Pancreas (tissue), 10 donors: ENCODE measurements at regions of chr17 and their contacts with region 1.

Region 1: DNA sequence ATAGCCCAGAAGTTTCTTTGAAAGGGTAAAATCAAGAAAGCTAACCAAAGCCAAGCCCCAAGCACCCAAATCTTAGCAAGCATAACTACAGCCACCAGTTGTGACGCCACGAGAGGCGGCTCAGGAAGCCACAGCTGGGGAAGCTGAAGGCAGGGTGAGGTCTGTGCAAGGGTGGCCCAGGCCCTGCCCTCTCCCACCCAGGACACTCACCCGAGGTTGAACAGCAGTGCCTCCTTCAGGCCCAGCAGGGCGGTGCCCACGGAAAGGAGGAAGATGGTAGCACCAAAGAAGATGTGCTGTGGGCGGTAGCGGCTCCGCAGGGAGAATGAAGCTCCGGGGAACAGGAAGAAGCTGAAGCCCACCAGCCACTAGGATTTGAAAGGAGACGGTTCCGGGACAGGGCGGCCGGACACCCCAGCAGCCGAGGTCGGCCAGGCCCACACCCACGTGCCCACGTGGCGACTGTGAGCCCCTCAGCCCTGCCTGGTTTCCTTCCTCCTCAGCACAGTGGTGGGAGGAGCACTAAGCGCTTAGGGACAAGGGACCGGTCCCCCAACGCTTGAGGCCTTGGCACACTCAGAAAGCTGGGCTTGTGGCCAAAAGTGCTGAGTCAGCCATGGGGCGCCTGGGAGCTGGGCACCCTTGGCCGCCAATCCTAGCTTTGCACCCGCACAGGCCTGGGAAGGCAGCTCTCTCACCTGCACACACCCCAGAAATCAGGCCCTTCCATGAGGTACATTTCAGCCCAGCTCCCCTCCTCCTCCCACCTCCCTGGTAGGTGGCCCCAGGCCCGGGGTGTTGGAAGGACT is 11.0 kb downstream of the CYB561 start:
- DNase-seq: peak; percentile 90 to 94 (median 92)
- ATAC-seq: peak; percentile 71 to 80 (median 72)
- H3K4me3 ChIP-seq: peak overlapping the region in 1 of 4 donors; percentile 9
- H3K27ac ChIP-seq: peak overlapping the region; percentile 49 to 74 (median 66)
- H3K4me1 ChIP-seq: peaks cover 28 to 53% (median 42%) of the 10 kb centered on the region in 3 donors
- H3K27me3 ChIP-seq: no peaks in the 10 kb centered on the region
- CTCF ChIP-seq: no peak

Region 2: DNA sequence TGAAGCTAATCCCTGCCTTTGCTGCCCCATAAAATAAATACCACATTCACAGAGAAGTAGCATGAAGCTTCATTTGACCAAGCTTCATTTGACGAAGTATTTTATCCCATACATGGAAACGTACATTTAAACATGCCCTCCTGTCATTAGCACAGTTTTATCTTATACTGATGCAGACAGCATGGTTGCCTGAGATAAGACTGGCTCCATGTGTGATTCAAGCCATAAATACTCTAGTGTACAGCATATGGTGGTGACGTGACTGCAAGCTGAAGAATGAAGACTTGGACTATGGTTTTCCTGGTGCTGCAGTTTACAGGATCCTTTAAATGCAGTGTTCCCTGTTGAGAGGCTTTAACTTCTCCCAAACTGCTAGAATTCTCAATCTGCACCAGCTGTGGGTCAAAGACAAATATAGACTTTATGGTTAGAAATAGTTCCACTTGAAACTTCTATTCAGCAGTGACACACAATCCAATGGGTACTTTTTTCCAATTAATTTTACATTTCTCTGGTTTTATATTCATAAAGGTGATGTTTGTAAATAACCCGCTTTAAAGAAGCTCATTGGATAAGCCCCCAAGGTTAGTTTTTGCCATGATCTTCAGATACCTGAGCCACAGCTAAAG is 53.9 kb before region 1 on chr17:
- intact Hi-C with region 1: no loop called
- DNase-seq: no peak
- ATAC-seq: no peak
- H3K4me3 ChIP-seq: no peak overlapping the region
- H3K27ac ChIP-seq: no peak overlapping the region
- H3K4me1 ChIP-seq: no peaks in the 10 kb centered on the region
- H3K27me3 ChIP-seq: no peaks in the 10 kb centered on the region
- CTCF ChIP-seq: no peak

Region 3: GRCh38 chr17:63699638-63700527 is 264.8 kb after region 1 on chr17 and contains the start of gene LIMD2:
- intact Hi-C with region 1: loop called in 1 of 3 experiments (anchors 10 kb)
- DNase-seq: peak in 5 of 6 donors; percentile 39 to 81 (median 63)
- ATAC-seq: peak; percentile 1 to 35 (median 22)
- H3K4me3 ChIP-seq: peak within 1 kb of the TSS; percentile 14 to 62 (median 46)
- H3K27ac ChIP-seq: peak within 1 kb of the TSS in 3 of 4 donors; percentile 16 to 67 (median 55)
- H3K4me1 ChIP-seq: no peaks in the 10 kb centered on the region
- H3K27me3 ChIP-seq: no peaks in the 10 kb centered on the region
- CTCF ChIP-seq: no peak
- total RNA-seq, gene LIMD2: 1.4 to 15.9 (median 4.7) TPM